ENCODE measurements at regions of chr17 and their contacts with region 1.

Region 1: DNA sequence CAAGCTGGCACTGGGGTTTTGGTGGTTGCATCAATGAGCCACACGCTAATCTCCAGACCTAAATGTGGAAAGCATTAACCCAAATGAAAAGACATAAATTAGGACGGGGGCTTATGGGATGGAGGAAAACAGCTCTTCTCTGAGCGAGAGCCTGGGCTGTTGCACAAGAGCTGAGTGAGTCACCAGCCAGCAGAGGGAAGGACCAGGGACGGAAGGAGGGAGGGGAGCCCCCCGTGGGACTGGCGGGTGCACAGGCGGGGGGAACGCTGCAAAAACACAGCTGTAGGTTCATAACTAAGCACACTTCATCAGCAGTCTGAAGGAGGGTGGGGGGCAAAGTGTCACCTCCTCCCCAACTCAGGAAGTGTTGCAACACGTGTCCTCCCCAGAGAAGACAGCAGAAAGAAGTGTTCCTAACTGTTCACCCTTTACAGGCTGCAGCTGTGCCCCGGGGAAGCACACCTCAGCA is 83.3 kb downstream of the GAS7 start:
- DNase-seq: peak; percentile 83 to 88
- ATAC-seq: peak; percentile 70 to 88 (median 74)
- H3K4me3 ChIP-seq: peak overlapping the region; percentile 37
- H3K4me3 Mint-ChIP-seq: peak overlapping the region; percentile 83
- H3K27ac ChIP-seq: peak overlapping the region; percentile 93
- H3K27ac Mint-ChIP-seq: peak overlapping the region; percentile 99 to 100
- H3K4me1 ChIP-seq: peaks cover 87% of the 10 kb centered on the region
- H3K4me1 Mint-ChIP-seq: peaks cover 84 to 87% of the 10 kb centered on the region in 2 donors
- H3K27me3 ChIP-seq: no peaks in the 10 kb centered on the region
- H3K27me3 Mint-ChIP-seq: no peaks in the 10 kb centered on the region
- CTCF ChIP-seq: no peak

Region 2: DNA sequence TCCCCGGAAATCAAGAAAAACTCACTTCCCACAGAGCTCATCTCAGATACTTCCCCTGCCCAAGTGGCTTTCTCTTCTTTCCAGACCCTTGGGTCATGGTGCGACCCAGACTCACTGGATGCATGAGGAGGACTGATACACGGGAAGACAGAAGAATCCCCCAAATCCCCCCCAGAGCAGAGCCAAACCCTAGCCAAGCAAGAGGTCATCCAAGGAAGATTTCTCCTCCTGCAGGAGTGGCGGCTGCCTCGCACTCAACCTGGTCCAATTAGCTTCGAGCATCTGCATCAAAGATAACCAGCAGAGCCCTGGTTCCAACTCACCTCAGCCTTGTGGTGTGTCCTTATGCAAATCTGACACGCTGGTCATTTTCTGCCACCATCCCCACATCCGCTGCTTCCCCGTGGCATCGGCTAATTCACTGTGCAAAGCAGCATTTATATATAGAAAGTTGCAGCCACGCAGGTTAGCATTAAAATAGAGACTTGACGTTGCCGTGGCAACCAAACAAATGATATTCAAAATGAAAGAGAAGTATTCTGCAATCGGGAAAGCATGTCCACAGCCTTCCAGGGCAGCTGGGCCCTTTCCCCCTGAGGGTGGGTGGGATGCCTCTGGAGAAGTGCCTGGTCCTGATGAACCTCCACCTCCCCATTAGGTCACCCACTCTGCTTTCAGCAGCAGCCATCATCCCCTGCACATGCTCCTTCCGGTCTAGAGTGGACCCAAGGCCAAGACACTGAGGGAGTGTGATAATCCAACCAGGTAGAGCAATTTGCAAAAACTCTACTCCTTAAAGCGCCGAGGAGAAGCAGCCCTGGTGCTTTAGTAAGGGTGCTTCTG is 55.5 kb before region 1 on chr17:
- intact Hi-C with region 1: loop called (anchors 1 kb)
- DNase-seq: peak; percentile 33 to 61
- ATAC-seq: peak; percentile 15 to 58 (median 51)
- H3K4me3 ChIP-seq: no peak overlapping the region
- H3K4me3 Mint-ChIP-seq: no peak overlapping the region
- H3K27ac ChIP-seq: peak overlapping the region; percentile 66
- H3K27ac Mint-ChIP-seq: peak overlapping the region; percentile 59 to 88
- H3K4me1 ChIP-seq: peaks cover 64% of the 10 kb centered on the region
- H3K4me1 Mint-ChIP-seq: peaks cover 54 to 68% of the 10 kb centered on the region in 2 donors
- H3K27me3 ChIP-seq: no peaks in the 10 kb centered on the region
- H3K27me3 Mint-ChIP-seq: no peaks in the 10 kb centered on the region
- CTCF ChIP-seq: no peak

Region 3: DNA sequence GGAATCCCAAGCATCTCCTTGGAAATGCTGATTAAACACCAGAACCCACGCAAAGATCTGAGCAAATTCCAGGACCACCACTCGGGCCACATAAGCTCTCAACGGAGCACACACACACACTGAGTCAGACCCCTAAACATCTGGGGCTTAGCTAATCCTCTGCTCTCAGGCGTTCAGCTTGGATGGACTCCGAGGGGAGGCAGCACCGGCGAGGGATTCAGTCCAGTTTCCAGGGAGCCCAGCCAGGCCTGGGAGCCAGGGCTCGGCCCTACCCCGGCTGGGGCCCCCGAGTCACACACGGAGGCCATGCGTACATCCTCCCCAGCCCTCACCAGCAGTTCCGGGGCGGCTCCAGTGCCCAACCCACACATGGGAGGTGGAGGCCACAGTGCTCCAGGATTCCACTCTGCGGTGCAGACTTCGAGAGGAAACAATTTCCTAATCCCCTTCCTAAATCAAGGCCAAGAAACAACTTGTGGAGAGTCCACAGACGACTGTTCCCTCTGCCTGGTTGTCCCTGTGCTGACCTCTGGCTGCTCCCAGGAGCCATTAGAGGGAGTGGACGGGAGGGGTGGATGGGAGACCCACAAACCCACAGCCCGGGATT is 12.8 kb after region 1 on chr17:
- intact Hi-C with region 1: no loop called
- DNase-seq: no peak
- ATAC-seq: peak in 1 of 3 donors; percentile 36
- H3K4me3 ChIP-seq: no peak overlapping the region
- H3K4me3 Mint-ChIP-seq: no peak overlapping the region
- H3K27ac ChIP-seq: peak overlapping the region; percentile 8
- H3K27ac Mint-ChIP-seq: peak overlapping the region in 1 of 2 donors; percentile 38
- H3K4me1 ChIP-seq: peaks cover 65% of the 10 kb centered on the region
- H3K4me1 Mint-ChIP-seq: peaks cover 33 to 57% of the 10 kb centered on the region in 2 donors
- H3K27me3 ChIP-seq: no peaks in the 10 kb centered on the region
- H3K27me3 Mint-ChIP-seq: peaks cover 0 to 7% of the 10 kb centered on the region in 2 donors
- CTCF ChIP-seq: no peak

Region 4: GRCh38 chr17:10156948-10157607 is 42.0 kb after region 1 on chr17:
- intact Hi-C with region 1: loop called (anchors 1 kb)
- DNase-seq: peak; percentile 59 to 65
- ATAC-seq: peak; percentile 71 to 82 (median 81)
- H3K4me3 ChIP-seq: no peak overlapping the region
- H3K4me3 Mint-ChIP-seq: peak overlapping the region; percentile 71
- H3K27ac ChIP-seq: peak overlapping the region; percentile 82
- H3K27ac Mint-ChIP-seq: peak overlapping the region; percentile 92 to 94
- H3K4me1 ChIP-seq: peaks cover 57% of the 10 kb centered on the region
- H3K4me1 Mint-ChIP-seq: peaks cover 32 to 46% of the 10 kb centered on the region in 2 donors
- H3K27me3 ChIP-seq: no peaks in the 10 kb centered on the region
- H3K27me3 Mint-ChIP-seq: no peaks in the 10 kb centered on the region
- CTCF ChIP-seq: no peak

Region 5: DNA sequence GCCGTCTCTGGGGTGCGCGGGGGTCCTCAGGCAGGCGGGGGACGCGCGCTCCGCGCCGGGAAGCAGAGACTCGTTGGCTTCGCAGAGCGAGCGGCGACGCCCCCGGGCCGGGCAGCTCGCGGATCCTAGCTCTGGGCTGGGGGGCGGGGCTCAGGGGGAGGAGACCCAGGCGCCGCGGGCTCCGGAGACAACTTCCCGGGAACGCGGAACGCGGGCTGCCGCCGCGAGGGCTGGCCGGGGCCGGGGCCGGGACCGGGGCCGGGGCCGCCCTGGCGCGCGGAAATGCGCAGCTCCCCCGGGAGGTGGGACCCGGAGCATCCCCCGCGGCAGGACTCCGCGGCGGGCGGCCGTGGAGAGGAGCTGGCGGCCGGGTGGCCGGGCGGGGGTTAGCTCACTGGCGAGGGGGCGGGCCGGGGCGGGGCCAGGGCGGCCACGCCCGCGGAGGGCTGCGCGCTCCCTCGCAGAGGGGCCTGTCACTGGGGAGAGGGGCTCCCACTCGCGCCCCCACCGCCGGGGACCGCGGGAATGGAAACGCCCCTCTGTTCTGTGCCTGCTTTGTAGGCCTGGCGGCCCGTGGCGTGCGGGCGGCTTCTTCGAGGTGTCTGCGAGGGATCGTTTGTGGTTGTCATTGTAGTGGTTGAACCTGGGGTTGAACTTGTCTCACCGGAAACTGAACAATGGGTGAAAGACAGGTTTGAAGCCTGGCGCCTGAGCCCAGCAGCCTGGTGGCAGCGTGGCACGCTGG is 83.6 kb after region 1 on chr17 and contains the start of gene GAS7:
- intact Hi-C with region 1: loop called (anchors 1 kb)
- DNase-seq: peak; percentile 68 to 78
- ATAC-seq: peak; percentile 69 to 84 (median 76)
- H3K4me3 ChIP-seq: peak within 1 kb of the TSS; percentile 45
- H3K4me3 Mint-ChIP-seq: peak within 1 kb of the TSS; percentile 84
- H3K27ac ChIP-seq: no peak within 1 kb of the TSS
- H3K27ac Mint-ChIP-seq: peak within 1 kb of the TSS; percentile 7 to 74
- H3K4me1 ChIP-seq: peaks cover 30% of the 10 kb centered on the region
- H3K4me1 Mint-ChIP-seq: peaks cover 19 to 34% of the 10 kb centered on the region in 2 donors
- H3K27me3 ChIP-seq: no peaks in the 10 kb centered on the region
- H3K27me3 Mint-ChIP-seq: peaks cover 18 to 27% of the 10 kb centered on the region in 2 donors
- CTCF ChIP-seq: no peak
- total RNA-seq, gene GAS7: 70.7 to 89.1 (median 84.8) TPM

Region 6: GRCh38 chr17:10618202-10618635 is 503.1 kb after region 1 on chr17:
- intact Hi-C with region 1: no loop called
- DNase-seq: peak; percentile 47 to 75
- ATAC-seq: peak; percentile 81 to 88 (median 83)
- H3K4me3 ChIP-seq: no peak overlapping the region
- H3K4me3 Mint-ChIP-seq: no peak overlapping the region
- H3K27ac ChIP-seq: no peak overlapping the region
- H3K27ac Mint-ChIP-seq: no peak overlapping the region
- H3K4me1 ChIP-seq: no peaks in the 10 kb centered on the region
- H3K4me1 Mint-ChIP-seq: peaks cover 0 to 4% of the 10 kb centered on the region in 2 donors
- H3K27me3 ChIP-seq: no peaks in the 10 kb centered on the region
- H3K27me3 Mint-ChIP-seq: peaks cover 6 to 9% of the 10 kb centered on the region in 2 donors
- CTCF ChIP-seq: peak; percentile 82